ENCODE measurements at regions of chr3 and their contacts with region 1.

Region 1: DNA sequence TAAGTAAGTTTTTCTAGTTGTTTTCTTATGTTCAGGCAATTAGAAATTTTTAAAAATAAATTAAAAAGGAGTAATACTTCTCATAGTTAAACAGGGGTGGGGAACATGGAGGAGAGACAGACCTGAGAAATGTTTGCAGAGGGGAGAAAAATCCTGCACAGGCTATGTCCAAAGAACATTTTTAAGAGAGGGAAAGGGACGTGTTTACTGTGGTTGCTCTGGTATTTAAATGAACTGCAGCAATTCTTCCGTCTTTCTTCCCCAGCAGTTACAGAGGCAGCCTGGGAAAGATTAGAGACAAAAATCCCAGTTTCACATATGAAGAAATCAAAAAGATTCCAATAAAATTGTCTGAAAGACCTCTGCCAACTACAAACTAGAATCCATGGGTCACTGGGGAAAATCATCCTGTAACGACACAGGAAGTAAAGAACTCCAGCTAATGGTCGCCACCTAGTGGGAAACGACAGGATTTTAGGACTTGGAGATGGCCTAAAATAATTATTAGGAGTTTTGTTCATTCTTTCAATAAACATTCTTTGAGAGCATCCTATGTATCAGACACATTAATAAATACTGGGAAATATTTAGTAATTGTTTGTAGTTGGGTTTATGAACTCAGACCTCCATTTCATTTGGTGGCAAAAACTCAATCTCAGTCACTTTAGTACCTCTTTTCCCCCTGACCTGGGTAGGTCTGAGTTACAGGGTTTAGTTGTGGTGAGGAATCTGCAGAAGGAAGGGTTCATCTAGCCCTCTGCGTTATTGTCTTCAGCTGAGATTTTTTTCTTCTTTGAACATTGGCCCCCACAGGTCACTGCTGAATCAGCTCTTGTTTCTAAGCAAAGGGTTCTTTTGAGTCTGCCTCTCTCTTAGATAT is 69.9 kb upstream of the GOLIM4 start:
- DNase-seq: peak; percentile 84
- H3K4me3 Mint-ChIP-seq: no peak overlapping the region
- H3K27ac Mint-ChIP-seq: no peak overlapping the region
- H3K4me1 Mint-ChIP-seq: no peaks in the 10 kb centered on the region
- H3K27me3 Mint-ChIP-seq: no peaks in the 10 kb centered on the region
- CTCF ChIP-seq: peak; percentile 72

Region 2: DNA sequence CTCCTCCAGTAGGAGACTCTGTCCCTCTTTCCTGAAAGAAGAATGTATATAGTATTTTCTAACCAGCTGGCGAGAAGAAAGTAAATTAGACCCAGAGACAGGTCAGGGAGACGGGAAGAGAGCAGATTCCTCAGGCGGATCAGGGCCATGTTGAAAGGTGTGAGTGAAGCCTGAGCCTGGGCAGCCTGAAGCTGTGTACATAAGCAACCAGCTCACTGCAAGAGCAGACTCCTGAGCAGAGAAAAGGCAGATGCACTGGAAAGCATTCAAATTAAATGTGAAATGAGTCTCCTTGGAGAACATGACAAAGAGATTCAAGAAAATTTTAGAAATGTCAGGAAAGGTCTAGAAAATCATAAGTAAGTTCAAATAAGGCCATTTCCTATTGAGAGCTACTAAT is 235.7 kb before region 1 on chr3:
- CTCF ChIA-PET with region 1: no interaction called
- POLR2A ChIA-PET with region 1: no interaction called
- intact Hi-C with region 1: loop called (anchors 5 kb)
- DNase-seq: no peak
- H3K4me3 Mint-ChIP-seq: no peak overlapping the region
- H3K27ac Mint-ChIP-seq: no peak overlapping the region
- H3K4me1 Mint-ChIP-seq: no peaks in the 10 kb centered on the region
- H3K27me3 Mint-ChIP-seq: no peaks in the 10 kb centered on the region
- CTCF ChIP-seq: no peak

Region 3: DNA sequence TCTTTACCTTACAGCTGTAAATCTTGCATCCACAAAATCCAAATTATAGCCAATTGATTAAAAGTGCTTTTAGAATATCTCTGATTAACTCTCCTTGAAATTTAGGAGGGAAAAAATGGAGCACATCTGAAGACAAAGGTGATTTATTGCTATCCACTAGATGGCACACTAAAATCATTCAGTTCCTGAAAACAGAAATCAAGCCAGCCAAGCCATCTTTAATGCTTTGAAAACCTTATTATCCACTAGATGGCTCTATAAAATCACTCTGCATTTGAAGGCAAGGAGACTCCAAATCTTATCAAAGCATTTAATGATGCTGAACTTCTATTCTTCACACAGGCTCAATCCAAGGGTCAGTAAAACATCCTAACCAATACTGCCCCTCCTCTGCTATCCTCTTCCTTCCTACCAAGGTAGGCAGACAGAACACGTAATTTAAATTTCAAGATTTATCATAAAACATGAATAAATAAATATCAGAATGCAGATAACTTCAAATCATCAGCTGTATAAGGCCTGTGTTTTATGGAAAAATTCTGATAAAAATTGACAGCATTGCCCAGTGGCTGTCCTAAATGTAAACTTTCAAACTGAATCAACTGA is 118.3 kb before region 1 on chr3:
- CTCF ChIA-PET with region 1: interaction called, 459 read pairs
- POLR2A ChIA-PET with region 1: interaction called, 8 read pairs
- intact Hi-C with region 1: loop called (anchors 1 kb)
- DNase-seq: peak; percentile 81
- H3K4me3 Mint-ChIP-seq: no peak overlapping the region
- H3K27ac Mint-ChIP-seq: no peak overlapping the region
- H3K4me1 Mint-ChIP-seq: peaks cover 15% of the 10 kb centered on the region
- H3K27me3 Mint-ChIP-seq: no peaks in the 10 kb centered on the region
- CTCF ChIP-seq: peak; percentile 85

Region 4: DNA sequence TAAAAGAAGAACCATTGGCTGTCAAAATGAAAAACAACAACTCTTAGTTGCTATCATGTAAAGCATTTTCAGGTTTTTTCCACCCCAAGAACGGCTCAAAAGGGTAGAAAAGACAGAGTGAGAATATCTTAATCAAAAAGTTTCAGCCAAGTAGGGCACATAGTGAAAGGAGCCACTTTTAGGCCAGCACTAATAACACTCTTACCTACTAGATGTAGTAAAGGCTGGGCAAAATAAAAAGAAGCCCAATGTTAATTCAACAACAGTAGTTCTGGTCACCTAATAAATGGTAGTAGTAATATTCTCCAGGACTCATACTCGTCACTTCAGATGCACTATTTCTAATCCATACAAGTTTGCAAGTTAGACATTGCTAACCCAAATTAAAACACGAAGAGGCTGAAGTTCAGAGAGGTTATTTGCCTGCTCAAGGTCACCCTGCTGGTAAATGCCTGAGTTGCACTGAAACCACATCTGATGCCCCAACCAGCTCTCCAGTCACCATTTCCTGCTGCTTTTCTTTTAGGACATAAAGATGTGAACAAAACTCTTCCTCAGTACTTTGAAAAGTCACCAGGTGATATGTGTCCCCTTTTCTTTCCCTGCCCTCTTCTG is 77.4 kb before region 1 on chr3:
- CTCF ChIA-PET with region 1: interaction called, 18 read pairs
- POLR2A ChIA-PET with region 1: no interaction called
- intact Hi-C with region 1: no loop called
- DNase-seq: peak; percentile 18
- H3K4me3 Mint-ChIP-seq: no peak overlapping the region
- H3K27ac Mint-ChIP-seq: peak overlapping the region; percentile 11
- H3K4me1 Mint-ChIP-seq: peaks cover 29% of the 10 kb centered on the region
- H3K27me3 Mint-ChIP-seq: no peaks in the 10 kb centered on the region
- CTCF ChIP-seq: peak; percentile 26

Region 5: DNA sequence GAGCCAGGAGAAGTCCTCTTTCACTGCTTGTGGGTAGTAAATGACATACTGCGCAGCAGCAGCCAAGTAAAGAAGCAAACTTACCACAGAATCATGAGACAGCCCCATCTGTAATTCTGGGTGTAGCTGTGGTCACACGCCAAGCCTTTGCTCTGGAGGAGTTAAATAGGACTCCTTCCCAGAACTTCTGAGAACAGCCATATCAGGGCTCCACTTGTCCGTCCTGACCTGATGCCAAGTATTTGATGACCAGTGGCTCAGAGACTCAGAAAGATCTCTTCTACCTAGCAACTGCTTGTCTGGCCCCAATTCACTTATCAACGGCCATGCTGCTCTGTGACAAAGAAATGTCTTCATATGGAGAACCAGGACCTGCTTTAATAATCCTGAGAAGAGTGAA is 49.4 kb before region 1 on chr3:
- CTCF ChIA-PET with region 1: interaction called, 13 read pairs
- POLR2A ChIA-PET with region 1: no interaction called
- intact Hi-C with region 1: no loop called
- DNase-seq: no peak
- H3K4me3 Mint-ChIP-seq: no peak overlapping the region
- H3K27ac Mint-ChIP-seq: no peak overlapping the region
- H3K4me1 Mint-ChIP-seq: peaks cover 13% of the 10 kb centered on the region
- H3K27me3 Mint-ChIP-seq: no peaks in the 10 kb centered on the region
- CTCF ChIP-seq: no peak

Region 6: DNA sequence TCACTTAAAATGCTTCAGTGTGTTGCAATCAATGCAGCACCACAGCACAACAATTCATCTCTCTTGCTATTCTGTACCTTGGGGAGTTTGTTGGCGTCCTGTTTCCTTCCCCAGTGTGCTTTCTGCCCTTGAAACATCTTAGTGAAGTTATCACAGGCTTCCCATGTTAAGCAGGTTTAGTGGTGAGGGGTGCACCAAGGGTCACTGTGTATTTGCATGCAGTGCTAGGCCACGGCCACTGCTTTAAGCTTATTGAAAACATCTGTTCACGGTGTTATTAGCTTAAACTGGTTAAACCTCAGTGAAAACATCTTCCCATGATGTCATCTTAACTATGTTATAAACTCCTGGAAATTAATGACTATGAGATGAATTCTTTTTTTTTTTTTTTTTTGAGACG is 147.4 kb after region 1 on chr3:
- CTCF ChIA-PET with region 1: no interaction called
- POLR2A ChIA-PET with region 1: no interaction called
- intact Hi-C with region 1: no loop called
- DNase-seq: no peak
- H3K4me3 Mint-ChIP-seq: no peak overlapping the region
- H3K27ac Mint-ChIP-seq: no peak overlapping the region
- H3K4me1 Mint-ChIP-seq: no peaks in the 10 kb centered on the region
- H3K27me3 Mint-ChIP-seq: peaks cover 27% of the 10 kb centered on the region
- CTCF ChIP-seq: no peak

Measured in MCF 10A (cell line).